ENCODE measurements at regions of chr14 and their contacts with region 1.

Region 1: GRCh38 chr14:21553266-21553665 is 26.6 kb downstream of the OR10G3 start:
- DNase-seq: no peak
- H3K4me3 ChIP-seq: no peak overlapping the region
- H3K4me1 ChIP-seq: peaks cover 18% of the 10 kb centered on the region
- H3K27me3 ChIP-seq: no peaks in the 10 kb centered on the region

Region 2: DNA sequence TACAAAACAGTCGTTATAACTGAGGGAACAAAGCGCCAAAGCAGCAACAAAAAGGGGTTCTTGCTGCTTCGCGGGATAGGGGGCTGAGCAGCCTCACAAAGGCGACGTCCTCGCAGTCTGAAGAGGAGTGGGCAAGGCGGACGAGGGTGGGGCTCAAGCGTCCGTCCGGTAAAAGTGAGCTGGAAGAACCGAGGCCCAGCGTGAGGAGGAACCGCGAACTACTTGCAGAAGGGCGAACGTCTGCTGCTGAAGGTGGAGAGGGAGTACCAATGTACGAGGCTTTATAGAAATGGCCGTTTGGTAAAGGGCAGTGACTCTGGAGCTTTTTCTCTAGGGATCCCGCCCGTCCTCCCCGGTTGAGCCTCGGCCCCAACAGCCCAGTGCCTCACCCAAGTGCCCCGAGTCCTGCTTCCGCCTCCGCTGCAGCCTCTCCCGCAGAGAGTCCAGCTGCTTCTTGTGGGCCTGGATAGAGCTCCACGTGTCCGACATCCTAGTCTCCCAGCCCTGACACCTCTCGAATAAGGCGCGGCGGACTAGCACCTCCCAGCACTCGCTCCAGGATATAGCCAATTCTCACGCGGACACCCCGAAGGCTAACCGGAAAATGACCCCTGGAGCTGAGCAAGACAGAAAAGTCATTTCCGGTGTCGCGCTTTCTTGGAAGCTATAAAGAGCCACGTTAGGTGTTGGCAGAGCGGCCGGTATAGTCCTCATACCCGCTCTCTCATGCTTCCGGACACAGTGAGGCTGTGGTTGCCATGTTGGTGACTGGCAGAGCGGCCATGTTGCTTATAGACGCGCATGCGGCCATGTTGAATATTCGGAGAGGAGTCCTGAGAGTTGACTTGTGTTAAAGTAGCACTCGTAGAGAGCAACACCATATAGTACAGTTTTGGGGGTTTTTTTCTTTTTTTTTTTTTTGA is 42.3 kb before region 1 on chr14 and contains the start of gene METTL3:
- in situ Hi-C with region 1: loop called (anchors 5 kb)
- DNase-seq: peak; percentile 96 to 99
- H3K4me3 ChIP-seq: peak within 1 kb of the TSS; percentile 86
- H3K4me1 ChIP-seq: peaks cover 18% of the 10 kb centered on the region
- H3K27me3 ChIP-seq: no peaks in the 10 kb centered on the region